Activated CD4-positive, alpha-beta T cell treated with anti-CD3 and anti-CD28 coated beads for 36 hours (primary cell): ENCODE measurements at regions of chr19 and their contacts with region 1.

Region 1: DNA sequence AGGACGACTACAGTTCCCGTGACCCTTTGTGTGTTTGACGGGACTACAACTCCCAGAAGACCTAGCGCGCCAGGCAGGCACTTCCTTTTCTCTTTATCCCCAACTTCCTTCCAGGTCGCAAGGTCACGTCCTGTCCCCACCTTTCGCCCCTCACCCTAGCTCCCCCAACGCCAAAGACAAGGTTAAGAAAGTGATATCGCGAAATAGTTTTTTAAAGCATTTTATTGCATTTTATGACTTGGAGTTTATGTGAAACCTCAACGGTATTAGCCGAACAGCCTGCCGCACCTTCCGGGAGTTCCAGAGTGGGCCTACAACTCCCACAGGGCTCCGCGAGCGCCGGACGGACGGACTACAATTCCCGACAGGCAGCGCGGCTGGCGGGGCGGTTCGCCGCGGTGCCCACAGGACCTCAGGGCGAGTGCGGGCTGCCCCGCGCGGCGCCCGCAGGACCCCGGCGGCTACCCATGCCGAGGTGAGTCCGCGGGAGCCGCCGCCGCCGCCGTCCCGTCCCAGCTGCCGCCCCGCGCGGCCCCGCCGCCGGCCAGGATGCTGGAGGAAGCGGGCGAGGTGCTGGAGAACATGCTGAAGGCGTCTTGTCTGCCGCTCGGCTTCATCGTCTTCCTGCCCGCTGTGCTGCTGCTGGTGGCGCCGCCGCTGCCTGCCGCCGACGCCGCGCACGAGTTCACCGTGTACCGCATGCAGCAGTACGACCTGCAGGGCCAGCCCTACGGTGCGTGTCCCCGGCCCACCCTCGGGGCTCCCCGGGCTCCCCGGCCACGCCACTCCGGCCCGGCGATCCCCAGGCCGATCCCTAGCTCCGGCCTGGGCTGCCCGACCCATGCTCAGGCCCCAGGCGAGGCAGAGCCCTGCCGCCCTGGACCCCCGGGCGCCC is at the start of gene NCLN:
- DNase-seq: peak; percentile 97
- ATAC-seq: peak; percentile 86
- H3K4me3 Mint-ChIP-seq: peak within 1 kb of the TSS; percentile 83
- H3K27ac Mint-ChIP-seq: peak within 1 kb of the TSS; percentile 94
- H3K4me1 Mint-ChIP-seq: peaks cover 56% of the 10 kb centered on the region
- H3K27me3 Mint-ChIP-seq: no peaks in the 10 kb centered on the region
- total RNA-seq, gene NCLN: 55.6 to 58.2 TPM

Region 2: GRCh38 chr19:2455851-2456570 is 729.7 kb before region 1 on chr19:
- CTCF ChIA-PET with region 1: no interaction called
- POLR2A ChIA-PET with region 1: no interaction called
- intact Hi-C with region 1: loop called in 1 of 2 experiments (anchors 1 kb)
- DNase-seq: peak; percentile 73
- ATAC-seq: peak; percentile 47
- H3K4me3 Mint-ChIP-seq: peak overlapping the region; percentile 84
- H3K27ac Mint-ChIP-seq: peak overlapping the region; percentile 88
- H3K4me1 Mint-ChIP-seq: peaks cover 16% of the 10 kb centered on the region
- H3K27me3 Mint-ChIP-seq: no peaks in the 10 kb centered on the region

Region 3: GRCh38 chr19:2944775-2945574 is 240.8 kb before region 1 on chr19 and contains the start of gene ZNF77:
- CTCF ChIA-PET with region 1: interaction called, 5 read pairs
- POLR2A ChIA-PET with region 1: no interaction called
- intact Hi-C with region 1: loop called (anchors 1 to 5 kb)
- DNase-seq: peak; percentile 99
- ATAC-seq: peak; percentile 100
- H3K4me3 Mint-ChIP-seq: peak within 1 kb of the TSS; percentile 83
- H3K27ac Mint-ChIP-seq: peak within 1 kb of the TSS; percentile 97
- H3K4me1 Mint-ChIP-seq: peaks cover 34% of the 10 kb centered on the region
- H3K27me3 Mint-ChIP-seq: no peaks in the 10 kb centered on the region
- total RNA-seq, gene ZNF77: 4.3 to 4.8 TPM

Region 4: GRCh38 chr19:3094601-3095437 is 90.9 kb before region 1 on chr19:
- CTCF ChIA-PET with region 1: no interaction called
- POLR2A ChIA-PET with region 1: no interaction called
- intact Hi-C with region 1: loop called in 1 of 2 experiments (anchors 1 kb)
- DNase-seq: peak; percentile 68
- ATAC-seq: peak; percentile 45
- H3K4me3 Mint-ChIP-seq: peak overlapping the region; percentile 74
- H3K27ac Mint-ChIP-seq: no peak overlapping the region
- H3K4me1 Mint-ChIP-seq: peaks cover 26% of the 10 kb centered on the region
- H3K27me3 Mint-ChIP-seq: no peaks in the 10 kb centered on the region

Region 5: DNA sequence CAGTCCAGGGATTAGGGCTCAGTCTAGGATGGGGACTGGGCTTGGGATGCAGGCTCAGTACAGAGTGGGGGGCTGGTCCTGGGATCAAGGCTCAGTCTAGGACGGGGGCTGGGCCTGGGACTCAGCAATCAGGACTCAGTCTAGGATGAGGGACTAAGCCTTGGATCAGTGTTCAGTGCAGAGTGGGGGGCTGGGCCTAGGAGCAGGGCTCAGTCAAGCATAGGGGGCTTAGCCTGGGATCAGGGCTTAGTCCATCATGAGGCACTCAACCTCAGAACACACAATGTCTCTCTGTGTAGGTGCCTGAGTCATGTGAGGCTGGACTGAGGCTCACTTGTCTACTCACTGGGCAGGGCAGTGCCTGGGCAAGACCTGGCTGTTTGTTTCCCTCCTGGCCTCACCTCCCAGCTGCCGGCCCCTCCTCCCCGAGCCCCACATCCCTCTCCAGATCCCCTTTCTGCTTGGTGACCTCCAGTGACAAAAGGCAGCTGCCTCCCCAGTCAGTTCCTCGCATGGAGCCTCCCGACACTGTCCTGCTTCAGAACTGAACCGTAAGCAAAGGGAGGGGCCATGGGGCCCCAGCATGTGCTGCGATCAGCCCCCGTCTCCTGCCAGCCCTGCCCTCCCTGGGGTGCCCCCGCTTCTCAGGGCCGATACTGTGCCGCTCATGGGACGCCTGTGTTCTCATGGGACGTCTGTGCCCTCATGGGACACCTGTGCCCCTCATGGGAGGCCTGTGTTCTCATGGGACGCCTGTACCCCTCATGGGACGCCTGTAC is 13.6 kb before region 1 on chr19:
- CTCF ChIA-PET with region 1: no interaction called
- POLR2A ChIA-PET with region 1: no interaction called
- intact Hi-C with region 1: no loop called
- DNase-seq: no peak
- ATAC-seq: peak; percentile 13
- H3K4me3 Mint-ChIP-seq: no peak overlapping the region
- H3K27ac Mint-ChIP-seq: no peak overlapping the region
- H3K4me1 Mint-ChIP-seq: peaks cover 16% of the 10 kb centered on the region
- H3K27me3 Mint-ChIP-seq: no peaks in the 10 kb centered on the region

Region 6: DNA sequence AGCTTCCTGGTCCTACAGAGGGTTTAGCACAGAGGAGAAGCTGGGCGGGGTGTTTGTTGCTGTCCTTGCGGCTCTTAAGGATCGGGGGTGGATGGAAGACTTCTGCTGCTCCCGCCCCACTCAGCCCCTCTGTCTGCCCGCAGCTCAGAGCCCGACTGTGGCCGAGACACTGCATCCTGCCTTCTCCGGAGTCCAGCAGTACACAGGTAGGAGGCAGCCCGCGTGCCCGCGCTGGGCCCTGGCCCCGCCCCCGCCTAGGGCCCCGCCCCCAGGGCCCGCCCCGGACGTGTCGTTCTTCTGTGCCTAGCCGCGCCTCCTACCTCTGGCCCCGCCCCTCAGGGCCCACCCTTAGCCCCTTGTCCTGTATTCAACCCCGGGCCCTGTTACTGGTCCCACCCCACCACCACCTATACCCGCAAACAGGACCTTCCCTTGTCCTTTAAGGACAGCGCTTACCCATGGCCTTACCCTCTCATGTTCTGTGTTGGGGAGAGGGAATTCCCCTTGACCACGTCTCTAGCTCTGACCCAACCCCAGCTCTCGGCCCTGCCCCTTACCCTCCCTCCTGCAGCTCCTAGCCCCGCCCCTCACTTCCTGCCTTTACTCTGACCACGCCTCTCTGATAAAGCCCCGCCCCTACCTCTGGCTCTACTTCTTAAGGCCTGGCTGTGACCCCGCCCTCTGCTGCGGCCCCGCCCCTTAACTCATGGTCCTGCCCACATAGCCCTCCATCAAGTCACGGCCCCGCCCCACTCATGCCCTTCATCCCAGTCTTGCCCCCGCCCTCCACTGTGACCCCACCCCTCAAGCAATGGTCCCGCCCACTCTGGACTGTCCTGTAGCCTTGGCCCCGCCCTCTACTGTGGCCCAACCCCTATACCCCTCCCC is 99.3 kb after region 1 on chr19:
- CTCF ChIA-PET with region 1: no interaction called
- POLR2A ChIA-PET with region 1: no interaction called
- intact Hi-C with region 1: loop called in 1 of 2 experiments (anchors 1 kb)
- DNase-seq: peak; percentile 94
- ATAC-seq: peak; percentile 91
- H3K4me3 Mint-ChIP-seq: peak overlapping the region; percentile 51
- H3K27ac Mint-ChIP-seq: no peak overlapping the region
- H3K4me1 Mint-ChIP-seq: peaks cover 12% of the 10 kb centered on the region
- H3K27me3 Mint-ChIP-seq: peaks cover 19% of the 10 kb centered on the region

Region 7: GRCh38 chr19:3626473-3627350 is 441.0 kb after region 1 on chr19 and contains the start of gene CACTIN:
- CTCF ChIA-PET with region 1: no interaction called
- POLR2A ChIA-PET with region 1: no interaction called
- intact Hi-C with region 1: loop called in 1 of 2 experiments (anchors 1 kb)
- DNase-seq: peak; percentile 99
- ATAC-seq: peak; percentile 98
- H3K4me3 Mint-ChIP-seq: peak within 1 kb of the TSS; percentile 91
- H3K27ac Mint-ChIP-seq: peak within 1 kb of the TSS; percentile 82
- H3K4me1 Mint-ChIP-seq: peaks cover 22% of the 10 kb centered on the region
- H3K27me3 Mint-ChIP-seq: no peaks in the 10 kb centered on the region
- total RNA-seq, gene CACTIN: 28.0 to 33.6 TPM